HEK293 (cell line): ENCODE measurements at regions of chr18 and their contacts with region 1.

Region 1: GRCh38 chr18:21629089-21629832 is 17.1 kb downstream of the SNRPD1 start:
- H3K4me3 ChIP-seq: no peak overlapping the region
- H3K27ac ChIP-seq: no peak overlapping the region
- H3K4me1 ChIP-seq: no peaks in the 10 kb centered on the region
- CTCF ChIP-seq: no peak

Region 2: DNA sequence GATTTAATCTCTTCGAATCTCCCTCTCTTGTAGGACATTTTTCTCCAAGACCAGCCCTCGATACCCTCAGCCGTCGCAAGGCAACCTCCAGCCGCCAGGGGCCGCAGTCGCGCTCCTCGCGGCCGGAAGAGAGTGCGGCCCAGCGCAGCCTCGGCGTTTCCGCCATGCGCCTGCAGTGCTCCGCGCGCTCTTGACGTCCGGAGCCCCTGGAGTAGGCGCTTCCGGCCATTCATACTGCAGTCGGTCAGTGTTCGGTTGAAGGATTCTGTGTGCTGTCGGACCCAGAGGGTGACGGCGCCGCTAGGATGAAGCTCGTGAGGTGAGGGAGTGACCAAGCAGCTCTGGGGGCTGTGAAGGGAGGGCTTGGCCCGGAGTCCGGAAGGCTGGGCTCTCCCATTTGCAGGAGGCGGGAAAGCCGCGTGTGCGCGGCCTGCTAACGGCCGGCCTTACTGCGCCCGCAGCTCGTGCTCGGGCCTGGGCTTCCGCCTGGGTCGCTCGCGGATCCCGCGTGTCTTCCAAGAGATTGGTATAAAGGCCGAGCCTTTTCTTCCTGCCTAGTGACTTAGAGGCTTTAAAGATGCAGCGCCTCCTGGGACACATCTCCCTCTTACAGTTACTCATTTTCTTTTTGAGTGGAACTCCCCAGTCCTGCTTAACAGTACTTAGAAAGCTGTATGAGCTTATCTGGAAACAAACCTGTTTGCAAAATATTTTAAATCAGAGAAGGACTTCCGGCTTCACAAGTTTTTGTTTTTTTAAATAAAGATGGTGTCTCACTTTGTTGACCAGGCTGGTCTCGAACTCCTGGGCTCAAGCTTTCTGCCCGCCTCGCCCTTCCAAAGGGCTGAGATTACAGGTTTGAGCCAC is 16.9 kb before region 1 on chr18 and contains the start of gene SNRPD1:
- CTCF ChIA-PET with region 1: interaction called, 10 read pairs
- POLR2A ChIA-PET with region 1: interaction called, 4 read pairs
- H3K4me3 ChIP-seq: peak within 1 kb of the TSS; percentile 92
- H3K27ac ChIP-seq: peak within 1 kb of the TSS; percentile 87
- H3K4me1 ChIP-seq: no peaks in the 10 kb centered on the region
- CTCF ChIP-seq: peak; percentile 98